HEK293 (cell line): ENCODE measurements at regions of chr10 and their contacts with region 1.

Region 1: DNA sequence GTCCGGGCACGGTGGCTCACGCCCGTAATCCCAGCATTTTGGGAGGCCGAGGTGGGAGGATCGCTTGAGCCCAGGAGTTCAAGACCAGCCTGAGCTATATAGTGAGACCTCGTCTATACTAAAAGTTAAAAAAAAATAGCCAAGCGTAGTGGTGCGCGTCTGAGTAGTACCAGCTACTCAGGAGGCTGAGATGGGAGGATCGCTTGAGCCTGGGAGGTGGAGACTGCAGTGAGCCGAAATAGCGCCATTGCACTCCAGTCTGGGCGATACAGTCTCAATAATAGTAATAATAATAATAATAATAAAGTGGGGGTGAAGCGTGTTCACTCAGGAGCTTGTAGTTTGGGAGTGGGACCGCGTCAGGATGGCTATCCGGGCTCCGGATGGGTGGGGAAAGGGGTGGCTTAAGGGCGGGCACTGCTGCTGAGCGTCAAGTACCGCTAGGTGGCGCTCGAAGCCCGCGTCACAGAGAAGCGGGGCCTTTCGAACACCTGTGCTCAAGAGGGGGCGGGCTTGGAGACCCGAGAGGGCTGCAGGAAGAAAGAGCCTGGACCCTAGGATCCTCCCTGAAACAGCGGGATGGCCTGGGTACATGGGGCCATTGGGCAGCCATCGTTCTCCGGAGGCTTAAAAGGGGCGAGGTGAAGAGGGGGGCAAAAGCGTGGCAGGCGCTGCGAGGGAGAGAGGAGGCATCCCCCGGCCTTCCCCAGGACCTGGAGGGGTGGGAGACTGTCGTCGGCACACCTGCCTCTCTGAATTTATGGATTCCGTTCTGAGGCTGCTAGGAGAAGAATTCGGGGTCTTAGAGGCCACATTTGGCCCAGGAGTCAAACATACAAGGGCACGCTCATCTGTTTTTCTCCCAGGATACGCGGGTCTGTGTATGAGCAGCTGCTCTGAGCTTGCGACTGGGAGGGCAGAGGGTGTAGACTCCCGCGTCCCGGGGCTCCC is 14.5 kb downstream of the LBX1 start:
- H3K4me3 ChIP-seq: no peak overlapping the region
- H3K27ac ChIP-seq: no peak overlapping the region
- H3K4me1 ChIP-seq: no peaks in the 10 kb centered on the region; the same call in 1 of the 2 replicates
- CTCF ChIP-seq: peak; percentile 94

Region 2: DNA sequence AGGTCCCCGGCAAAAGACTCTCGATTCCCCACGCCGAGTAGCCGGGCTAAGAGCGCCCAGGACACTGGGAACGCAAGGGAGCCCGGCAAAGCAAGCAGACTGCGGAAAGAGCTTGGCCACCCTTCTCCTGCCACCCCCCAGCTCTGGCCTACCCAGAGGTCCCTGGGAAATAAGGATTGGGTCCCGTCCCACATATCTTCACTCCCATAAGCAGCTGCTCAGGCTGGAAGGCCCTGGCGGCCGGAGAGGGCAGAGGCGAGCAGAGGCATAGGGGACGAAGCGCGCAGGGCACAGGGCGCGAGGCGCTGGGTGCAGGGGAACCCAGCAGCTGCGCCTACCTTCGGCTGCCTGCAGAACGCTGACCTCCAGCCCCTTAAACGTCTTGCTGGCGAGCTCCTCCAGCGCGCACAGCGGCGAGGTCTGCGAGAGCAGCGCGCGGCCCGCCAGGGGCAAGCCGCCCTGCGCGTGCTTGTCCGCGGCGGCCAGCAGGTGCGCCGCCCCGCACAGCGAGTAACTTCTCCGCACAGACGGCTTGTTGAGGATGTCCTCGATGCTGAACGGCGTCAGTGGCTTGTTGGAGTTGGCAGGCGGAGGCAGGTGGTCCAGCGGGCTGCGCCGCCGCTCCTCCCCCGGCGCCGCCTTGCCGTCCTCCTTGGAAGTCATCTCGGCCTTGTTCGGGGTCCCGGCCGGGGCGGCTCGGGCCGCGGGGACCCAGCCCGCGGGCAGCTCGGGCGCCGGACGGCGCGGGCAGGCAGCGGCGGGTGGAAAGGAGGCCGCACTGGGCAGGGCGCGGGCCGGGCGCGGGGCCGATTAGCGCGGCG is 13.6 kb after region 1 on chr10:
- CTCF ChIA-PET with region 1: interaction called, 19 read pairs
- POLR2A ChIA-PET with region 1: no interaction called
- H3K4me3 ChIP-seq: no peak overlapping the region; the same call in 1 of the 2 replicates
- H3K27ac ChIP-seq: peak overlapping the region; percentile 67; the same call in 1 of the 2 replicates
- H3K4me1 ChIP-seq: peaks cover 9% of the 10 kb centered on the region
- CTCF ChIP-seq: no peak

Region 3: DNA sequence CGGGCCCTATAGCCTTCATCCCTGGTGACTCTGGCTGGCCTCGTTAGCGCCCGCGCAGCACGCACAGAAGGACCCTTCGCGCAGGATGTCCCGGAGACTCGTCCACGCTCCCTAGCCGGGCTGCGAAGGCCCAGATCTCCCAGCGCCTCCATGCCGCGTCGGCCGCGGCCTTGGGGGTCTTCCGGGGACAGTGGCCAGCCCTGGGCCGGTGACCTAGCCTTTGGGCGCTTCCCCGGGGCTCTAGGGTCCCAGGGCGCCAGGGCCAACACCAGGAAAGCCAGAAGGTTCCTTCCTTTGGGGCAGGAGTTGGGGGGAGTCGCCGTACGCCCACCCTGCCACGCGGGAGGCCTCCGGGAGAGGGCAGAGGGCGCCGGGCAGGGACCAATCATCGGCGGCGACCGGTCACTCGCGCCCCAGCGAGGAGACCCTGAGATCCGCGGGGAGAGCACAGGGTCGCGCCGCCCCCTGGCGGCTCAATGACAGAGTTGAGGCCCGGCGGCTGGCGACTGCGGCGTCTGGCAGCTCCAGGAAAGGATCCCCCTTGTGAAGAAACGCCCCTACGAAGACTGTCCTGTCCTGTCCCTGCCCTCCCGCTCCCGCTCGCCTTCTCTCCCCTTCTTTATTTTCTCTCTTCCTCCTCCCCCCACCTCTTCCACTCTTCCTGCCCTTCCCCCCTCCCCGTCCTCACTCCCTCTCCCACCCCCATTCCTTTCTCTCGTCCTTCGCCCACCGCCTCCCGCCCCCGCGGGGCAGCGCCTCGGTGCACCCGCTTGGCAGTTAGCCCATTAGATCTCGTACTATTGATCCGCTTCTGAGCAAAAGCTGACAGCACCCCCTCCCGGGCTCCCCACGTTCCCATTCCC is 76.8 kb after region 1 on chr10:
- CTCF ChIA-PET with region 1: interaction called, 112 read pairs
- POLR2A ChIA-PET with region 1: no interaction called
- H3K4me3 ChIP-seq: peak overlapping the region; percentile 51
- H3K27ac ChIP-seq: peak overlapping the region; percentile 24; the same call in 1 of the 2 replicates
- H3K4me1 ChIP-seq: peaks cover 3% of the 10 kb centered on the region; the same call in 1 of the 2 replicates
- CTCF ChIP-seq: peak; percentile 90

Region 4: GRCh38 chr10:101436302-101436701 is 221.6 kb after region 1 on chr10:
- CTCF ChIA-PET with region 1: interaction called, 92 read pairs
- POLR2A ChIA-PET with region 1: no interaction called
- H3K4me3 ChIP-seq: no peak overlapping the region
- H3K27ac ChIP-seq: no peak overlapping the region
- H3K4me1 ChIP-seq: peaks cover 8% of the 10 kb centered on the region
- CTCF ChIP-seq: no peak

Region 5: DNA sequence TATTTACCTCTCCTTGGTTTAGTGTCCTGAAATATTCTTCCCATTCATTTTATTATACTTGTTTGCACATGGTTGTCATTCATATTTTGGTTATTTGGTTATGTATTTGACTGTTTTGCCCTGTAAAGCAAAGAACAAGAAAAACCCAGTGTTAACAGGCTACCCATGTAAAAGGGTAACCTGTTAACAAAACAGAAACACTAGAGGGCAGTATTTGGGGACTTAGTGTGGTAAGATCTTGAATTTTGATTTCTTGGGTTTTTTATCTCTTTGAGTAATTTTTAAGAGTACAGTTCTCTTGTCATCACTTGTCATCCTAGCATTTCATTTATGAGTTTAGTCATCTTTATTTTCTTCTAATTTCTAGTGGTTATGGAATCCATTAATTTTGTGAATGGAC is 322.1 kb after region 1 on chr10:
- CTCF ChIA-PET with region 1: interaction called, 11 read pairs
- POLR2A ChIA-PET with region 1: no interaction called
- H3K4me3 ChIP-seq: no peak overlapping the region
- H3K27ac ChIP-seq: no peak overlapping the region
- H3K4me1 ChIP-seq: no peaks in the 10 kb centered on the region
- CTCF ChIP-seq: 0 out of 2 replicates have a peak, but pooled peaks have one; percentile 18

Region 6: DNA sequence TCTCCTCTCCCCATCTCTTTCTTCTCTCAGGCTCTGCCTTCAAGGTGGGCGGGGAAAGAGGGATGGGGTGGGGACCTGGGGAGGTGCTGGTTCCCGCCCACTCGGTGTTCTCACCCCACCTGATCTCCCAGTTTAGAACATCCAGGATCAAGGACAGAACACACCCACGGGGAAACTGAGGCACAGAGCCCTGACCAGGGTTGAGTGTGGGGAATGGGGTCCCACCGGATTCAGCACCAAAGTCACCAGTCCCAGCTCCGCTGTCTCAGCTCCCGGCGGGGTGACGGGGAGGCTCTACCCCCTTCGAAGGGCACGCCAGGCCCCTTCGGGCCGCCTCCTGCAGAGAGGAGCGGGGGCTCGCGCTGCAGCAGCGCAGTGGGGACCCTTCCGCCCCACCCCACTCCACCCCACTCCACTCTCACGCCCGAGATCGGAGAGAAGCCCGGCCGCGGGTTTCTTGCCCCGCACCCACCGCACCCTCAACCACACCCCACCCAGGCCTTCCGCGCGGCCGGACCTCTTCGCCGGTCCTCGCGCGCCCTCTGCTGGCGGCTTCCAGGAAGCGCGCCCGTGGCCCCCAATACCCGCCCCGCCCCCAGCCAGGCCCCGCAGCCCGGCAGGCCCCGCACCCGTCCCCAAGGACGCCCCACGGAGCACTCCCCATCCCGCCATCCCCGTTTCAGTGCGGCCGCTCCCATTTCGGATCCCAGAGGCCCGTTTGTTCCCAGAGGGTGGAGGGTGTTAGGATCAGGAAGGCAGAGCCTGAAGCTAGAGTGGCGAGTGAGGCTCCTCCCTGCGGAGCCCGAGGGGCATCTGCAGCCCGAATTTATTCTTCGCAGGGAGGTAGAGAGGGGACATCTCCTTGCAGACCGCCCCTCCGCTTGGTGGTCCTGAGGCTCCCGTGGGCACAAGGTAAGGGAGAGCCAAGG is 355.4 kb after region 1 on chr10:
- CTCF ChIA-PET with region 1: interaction called, 77 read pairs
- POLR2A ChIA-PET with region 1: interaction called, 4 read pairs
- H3K4me3 ChIP-seq: peak overlapping the region; percentile 65
- H3K27ac ChIP-seq: no peak overlapping the region; the same call in 1 of the 2 replicates
- H3K4me1 ChIP-seq: peaks cover 3% of the 10 kb centered on the region
- CTCF ChIP-seq: peak; percentile 93